ENCODE measurements at regions of chr13 and their contacts with region 1.

Region 1: DNA sequence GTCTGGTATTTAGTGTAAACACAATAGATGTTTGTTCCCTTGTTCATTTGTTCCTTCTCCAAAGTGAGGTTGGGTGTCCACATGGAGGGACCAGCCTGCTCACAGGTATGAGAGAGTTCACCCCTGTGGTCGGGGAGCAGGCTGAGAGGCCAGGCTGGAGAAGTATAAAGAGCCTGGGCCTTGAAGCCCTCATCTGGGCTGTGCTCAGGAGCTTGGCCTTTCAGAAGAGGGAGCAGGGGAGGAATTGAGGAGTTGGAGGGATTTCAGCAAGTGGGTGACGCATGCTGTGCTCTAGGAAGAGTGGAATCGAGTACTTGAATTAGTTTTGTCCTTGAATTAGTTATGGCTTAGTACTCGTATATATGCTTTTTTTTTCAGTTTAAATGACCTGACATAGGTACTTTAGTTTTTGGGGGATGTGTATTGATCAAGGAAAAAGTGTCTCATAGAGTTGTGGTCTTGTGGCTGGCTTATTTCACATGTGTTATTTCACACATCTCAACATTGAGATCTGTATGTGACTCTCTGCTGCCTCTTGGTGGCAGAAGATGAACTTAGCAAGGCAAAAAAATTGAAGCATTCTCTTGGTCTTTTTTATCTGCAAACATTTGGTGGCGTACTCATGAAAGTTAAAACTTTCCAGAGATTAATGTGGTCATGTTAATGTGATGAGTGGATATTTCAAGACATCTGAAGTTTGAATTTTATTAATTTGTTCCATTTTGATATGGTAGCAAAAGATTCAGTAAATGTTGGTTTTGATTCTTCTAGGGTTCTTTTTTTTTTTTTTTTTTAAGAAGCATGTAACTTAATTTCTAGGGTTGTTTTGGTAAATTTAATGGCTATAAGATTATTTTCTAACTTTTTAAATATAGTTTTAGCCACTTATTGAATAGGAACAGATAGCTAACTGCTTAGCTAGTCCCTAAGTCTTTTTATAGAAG is 54.3 kb downstream of the SLAIN1 start:
- DNase-seq: peak; percentile 23 to 43
- H3K4me3 ChIP-seq: no peak overlapping the region
- H3K27ac ChIP-seq: no peak overlapping the region
- H3K4me1 ChIP-seq: no peaks in the 10 kb centered on the region
- H3K27me3 ChIP-seq: no peaks in the 10 kb centered on the region
- CTCF ChIP-seq: peak; percentile 85

Region 2: GRCh38 chr13:77565635-77566034 is 186.2 kb before region 1 on chr13:
- CTCF ChIA-PET with region 1: no interaction called
- POLR2A ChIA-PET with region 1: no interaction called
- intact Hi-C with region 1: loop called (anchors 2 kb)
- DNase-seq: peak in 1 of 2 experiments; percentile 50
- H3K4me3 ChIP-seq: no peak overlapping the region
- H3K27ac ChIP-seq: no peak overlapping the region
- H3K4me1 ChIP-seq: no peaks in the 10 kb centered on the region; the same call in 1 of the 2 replicates
- H3K27me3 ChIP-seq: no peaks in the 10 kb centered on the region
- CTCF ChIP-seq: peak; percentile 81

Region 3: DNA sequence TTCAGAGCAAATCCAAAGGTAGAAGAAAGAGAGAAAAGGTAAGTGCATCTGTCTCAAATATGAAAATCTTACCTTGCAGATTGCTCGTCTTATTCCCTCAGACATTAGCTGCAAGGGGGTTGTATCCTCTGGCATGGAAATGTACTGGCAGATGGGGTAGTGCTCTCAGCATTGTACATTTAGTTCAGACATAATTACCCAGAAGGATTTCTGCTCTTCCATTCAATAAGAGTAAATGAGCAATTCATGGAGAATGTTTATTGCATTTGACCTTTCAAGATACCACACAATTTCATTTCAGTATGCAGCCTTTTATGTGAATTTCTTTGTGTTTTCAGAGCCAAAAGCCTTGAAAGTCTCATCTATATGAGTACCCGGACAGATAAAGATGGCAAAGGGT is 152.4 kb before region 1 on chr13:
- CTCF ChIA-PET with region 1: no interaction called
- POLR2A ChIA-PET with region 1: no interaction called
- intact Hi-C with region 1: loop called (anchors 5 kb)
- DNase-seq: no peak
- H3K4me3 ChIP-seq: no peak overlapping the region
- H3K27ac ChIP-seq: no peak overlapping the region
- H3K4me1 ChIP-seq: no peaks in the 10 kb centered on the region
- H3K27me3 ChIP-seq: no peaks in the 10 kb centered on the region
- CTCF ChIP-seq: no peak

Measured in PC-9 (cell line).